Activated CD4-positive, alpha-beta T cell treated with anti-CD3 and anti-CD28 coated beads for 36 hours (primary cell): ENCODE measurements at regions of chr1 and their contacts with region 1.

Region 1: GRCh38 chr1:145845514-145846161 is at the start of gene NUDT17:
- DNase-seq: peak; percentile 89
- ATAC-seq: peak; percentile 75
- H3K4me3 Mint-ChIP-seq: no peak within 1 kb of the TSS
- H3K27ac Mint-ChIP-seq: no peak within 1 kb of the TSS
- H3K4me1 Mint-ChIP-seq: peaks cover 7% of the 10 kb centered on the region
- H3K27me3 Mint-ChIP-seq: no peaks in the 10 kb centered on the region
- total RNA-seq, gene NUDT17: 3.7 to 4.0 TPM

Region 2: GRCh38 chr1:145765574-145765973 is 80.1 kb before region 1 on chr1:
- CTCF ChIA-PET with region 1: no interaction called
- POLR2A ChIA-PET with region 1: no interaction called
- intact Hi-C with region 1: no loop called
- DNase-seq: no peak
- ATAC-seq: no peak
- H3K4me3 Mint-ChIP-seq: no peak overlapping the region
- H3K27ac Mint-ChIP-seq: no peak overlapping the region
- H3K4me1 Mint-ChIP-seq: no peaks in the 10 kb centered on the region
- H3K27me3 Mint-ChIP-seq: no peaks in the 10 kb centered on the region

Region 3: GRCh38 chr1:145858894-145859490 is 13.4 kb after region 1 on chr1 and contains the start of gene PIAS3:
- CTCF ChIA-PET with region 1: interaction called, 168 read pairs
- POLR2A ChIA-PET with region 1: interaction called, 21 read pairs
- intact Hi-C with region 1: loop called in 1 of 2 experiments (anchors 1 kb)
- DNase-seq: peak; percentile 93
- ATAC-seq: peak; percentile 86
- H3K4me3 Mint-ChIP-seq: peak within 1 kb of the TSS; percentile 90
- H3K27ac Mint-ChIP-seq: peak within 1 kb of the TSS; percentile 79
- H3K4me1 Mint-ChIP-seq: peaks cover 12% of the 10 kb centered on the region
- H3K27me3 Mint-ChIP-seq: no peaks in the 10 kb centered on the region
- total RNA-seq, gene PIAS3: 20.0 to 22.0 TPM

Region 4: GRCh38 chr1:145885738-145886287 is 40.2 kb after region 1 on chr1 and contains the start of gene ANKRD35:
- CTCF ChIA-PET with region 1: interaction called, 30 read pairs
- POLR2A ChIA-PET with region 1: no interaction called
- intact Hi-C with region 1: loop called (anchors 1 to 5 kb)
- DNase-seq: peak; percentile 92
- ATAC-seq: peak; percentile 100
- H3K4me3 Mint-ChIP-seq: peak within 1 kb of the TSS; percentile 72
- H3K27ac Mint-ChIP-seq: no peak within 1 kb of the TSS
- H3K4me1 Mint-ChIP-seq: peaks cover 14% of the 10 kb centered on the region
- H3K27me3 Mint-ChIP-seq: peaks cover 17% of the 10 kb centered on the region
- total RNA-seq, gene ANKRD35: 0.30 to 0.55 TPM

Region 5: DNA sequence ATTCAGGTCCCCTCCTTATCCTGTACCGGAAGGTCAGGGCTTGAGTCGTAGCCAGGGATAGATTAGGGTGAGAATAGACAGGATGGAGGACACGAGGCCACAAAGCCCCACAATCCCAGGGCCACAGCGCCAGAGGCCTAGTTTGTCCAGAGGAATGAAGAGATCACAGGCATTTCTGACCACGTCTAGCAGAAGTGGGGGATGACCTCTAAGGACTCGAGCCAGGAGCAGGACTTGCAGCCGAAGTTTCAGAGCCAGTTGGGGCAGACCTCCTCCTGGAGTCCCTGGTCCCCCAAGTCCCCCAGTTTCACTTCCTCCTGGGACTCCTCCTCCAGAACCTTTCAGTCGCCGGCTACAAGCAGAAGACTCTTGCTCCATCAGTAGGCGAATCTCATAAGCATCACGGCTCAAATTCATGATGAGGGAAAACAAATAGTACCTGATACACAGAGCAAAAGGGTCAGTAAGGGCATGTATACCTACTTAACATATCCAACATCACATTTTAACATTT is 66.5 kb after region 1 on chr1:
- CTCF ChIA-PET with region 1: interaction called, 44 read pairs
- POLR2A ChIA-PET with region 1: interaction called, 5 read pairs
- intact Hi-C with region 1: loop called (anchors 1 to 5 kb)
- DNase-seq: no peak
- ATAC-seq: no peak
- H3K4me3 Mint-ChIP-seq: no peak overlapping the region
- H3K27ac Mint-ChIP-seq: peak overlapping the region; percentile 1
- H3K4me1 Mint-ChIP-seq: peaks cover 12% of the 10 kb centered on the region
- H3K27me3 Mint-ChIP-seq: no peaks in the 10 kb centered on the region

Region 6: DNA sequence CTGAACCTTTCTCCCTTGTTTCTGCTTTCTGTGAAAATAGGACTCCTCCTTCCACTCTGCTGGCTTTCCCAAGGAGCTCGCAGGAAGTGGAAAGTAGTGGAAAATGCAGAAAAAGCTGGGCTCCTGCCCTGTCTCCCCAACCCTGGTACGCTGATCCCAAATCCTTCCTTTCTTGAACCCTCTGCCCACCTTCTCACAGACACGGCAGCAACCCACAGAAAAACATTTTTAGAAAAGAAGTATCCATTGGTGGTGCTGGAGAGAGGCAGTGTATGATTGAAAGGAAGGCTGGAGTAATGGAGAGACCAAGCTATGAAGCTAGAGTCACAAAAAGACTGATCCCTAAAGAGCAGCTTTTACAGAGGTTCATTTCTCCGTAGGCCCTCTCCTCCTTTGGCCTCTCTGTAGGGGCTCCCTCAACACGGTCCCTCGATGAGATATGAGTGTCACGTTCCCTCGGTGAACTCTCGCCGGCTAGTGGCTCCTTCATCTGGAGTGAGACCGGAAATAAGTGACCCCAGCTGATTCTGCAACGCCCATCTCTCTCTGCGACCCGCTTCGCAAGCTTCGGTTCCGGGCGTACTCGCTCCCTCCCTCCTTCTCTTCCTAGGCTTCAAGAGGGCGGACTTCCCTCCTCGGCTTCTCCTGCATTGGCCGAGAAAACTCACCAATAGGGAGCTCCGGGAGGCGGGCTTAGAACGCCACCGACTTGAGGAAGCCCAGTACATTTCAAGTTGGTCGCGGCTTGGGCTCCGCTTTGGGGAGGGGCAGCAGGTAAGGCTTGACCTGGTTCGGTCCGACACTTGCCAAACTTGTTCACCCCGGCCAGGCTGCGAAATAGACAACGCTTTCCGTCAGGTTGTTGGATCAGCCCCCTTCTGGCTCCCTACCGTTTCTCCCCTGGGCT is 118.6 kb after region 1 on chr1 and contains the starts of genes ANKRD34A and POLR3GL:
- CTCF ChIA-PET with region 1: interaction called, 12 read pairs
- POLR2A ChIA-PET with region 1: interaction called, 5 read pairs
- intact Hi-C with region 1: no loop called
- DNase-seq: peak; percentile 95
- ATAC-seq: peak; percentile 88
- H3K4me3 Mint-ChIP-seq: peak within 1 kb of the TSS; percentile 85
- H3K27ac Mint-ChIP-seq: peak within 1 kb of the TSS; percentile 87
- H3K4me1 Mint-ChIP-seq: peaks cover 33% of the 10 kb centered on the region
- H3K27me3 Mint-ChIP-seq: no peaks in the 10 kb centered on the region
- total RNA-seq, gene ANKRD34A: 5.8 to 6.1 TPM
- total RNA-seq, gene POLR3GL: 19.3 to 22.4 TPM

Region 7: DNA sequence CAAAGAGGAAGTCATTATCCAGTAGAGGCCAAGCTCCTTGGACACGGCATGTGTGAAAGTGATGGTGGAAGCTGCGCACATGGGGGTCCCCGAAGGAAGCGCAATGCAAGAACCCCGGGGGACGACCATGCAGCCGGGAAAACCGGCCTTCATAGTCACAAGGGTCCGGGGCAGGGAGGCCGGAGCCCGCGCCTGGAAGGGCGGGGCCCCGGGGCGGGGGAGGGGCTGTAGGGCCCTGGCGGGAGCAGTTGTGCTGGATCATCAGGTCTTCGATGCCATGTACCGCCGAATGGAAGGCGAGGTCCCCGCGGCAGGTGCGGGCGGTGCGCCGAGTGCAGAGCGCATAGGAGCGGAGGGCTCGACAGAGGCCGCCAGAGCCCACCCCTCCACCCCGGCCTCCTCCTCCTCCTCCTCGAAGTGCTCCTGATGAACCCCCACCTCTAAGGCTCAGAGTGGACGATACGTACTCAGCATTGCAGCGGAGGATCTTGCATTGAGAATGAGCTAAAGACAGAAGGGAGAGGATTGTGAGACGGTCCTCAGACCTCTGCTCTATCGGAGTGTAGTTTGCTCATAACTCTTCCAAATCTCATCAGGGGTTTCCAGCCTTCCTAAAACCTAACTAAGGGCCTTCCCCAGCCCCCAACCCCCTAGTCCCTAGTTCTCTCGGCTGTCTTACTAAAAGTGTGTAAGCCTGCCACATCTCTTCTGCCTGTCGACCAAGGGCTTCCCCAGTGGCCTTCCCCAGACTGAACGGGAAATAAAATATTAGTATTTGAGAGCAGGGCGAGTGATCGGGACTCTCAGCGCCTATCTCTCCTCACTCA is 173.8 kb after region 1 on chr1:
- CTCF ChIA-PET with region 1: interaction called, 14 read pairs
- POLR2A ChIA-PET with region 1: interaction called, 3 read pairs
- intact Hi-C with region 1: no loop called
- DNase-seq: peak; percentile 30
- ATAC-seq: peak; percentile 19
- H3K4me3 Mint-ChIP-seq: no peak overlapping the region
- H3K27ac Mint-ChIP-seq: no peak overlapping the region
- H3K4me1 Mint-ChIP-seq: peaks cover 8% of the 10 kb centered on the region
- H3K27me3 Mint-ChIP-seq: peaks cover 36% of the 10 kb centered on the region